ENCODE measurements at regions of chr12 and their contacts with region 1.

Region 1: GRCh38 chr12:53321074-53321814 is at the start of gene AAAS:
- DNase-seq: peak; percentile 98
- H3K4me3 Mint-ChIP-seq: peak within 1 kb of the TSS; percentile 85
- H3K27ac Mint-ChIP-seq: peak within 1 kb of the TSS; percentile 93
- H3K4me1 Mint-ChIP-seq: peaks cover 49% of the 10 kb centered on the region
- H3K27me3 Mint-ChIP-seq: no peaks in the 10 kb centered on the region
- total RNA-seq, gene AAAS: 59.1 to 63.0 TPM

Region 2: DNA sequence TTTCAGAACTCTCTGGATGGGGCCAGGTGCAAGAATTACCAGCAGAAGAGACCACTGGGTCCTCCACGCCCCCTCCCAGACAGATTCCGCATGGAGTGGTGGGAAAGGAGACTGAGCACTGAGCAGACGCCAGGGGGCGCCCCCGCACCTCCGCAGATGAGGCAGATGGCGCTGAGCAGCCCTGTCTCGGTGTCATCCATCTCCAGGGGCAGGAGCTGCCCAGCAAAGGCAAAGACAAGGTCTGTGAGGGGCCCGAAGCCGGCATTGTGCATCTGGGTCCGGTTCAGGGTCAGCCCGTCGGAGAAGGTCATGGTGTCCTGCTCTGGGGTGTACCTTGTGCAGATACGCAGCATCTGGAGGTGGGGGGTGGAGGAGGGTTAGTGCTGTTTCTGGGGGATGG is 107.9 kb before region 1 on chr12:
- CTCF ChIA-PET with region 1: interaction called, 94 read pairs
- POLR2A ChIA-PET with region 1: no interaction called
- DNase-seq: peak; percentile 84
- H3K4me3 Mint-ChIP-seq: no peak overlapping the region
- H3K27ac Mint-ChIP-seq: peak overlapping the region; percentile 37
- H3K4me1 Mint-ChIP-seq: peaks cover 93% of the 10 kb centered on the region
- H3K27me3 Mint-ChIP-seq: no peaks in the 10 kb centered on the region

Region 3: DNA sequence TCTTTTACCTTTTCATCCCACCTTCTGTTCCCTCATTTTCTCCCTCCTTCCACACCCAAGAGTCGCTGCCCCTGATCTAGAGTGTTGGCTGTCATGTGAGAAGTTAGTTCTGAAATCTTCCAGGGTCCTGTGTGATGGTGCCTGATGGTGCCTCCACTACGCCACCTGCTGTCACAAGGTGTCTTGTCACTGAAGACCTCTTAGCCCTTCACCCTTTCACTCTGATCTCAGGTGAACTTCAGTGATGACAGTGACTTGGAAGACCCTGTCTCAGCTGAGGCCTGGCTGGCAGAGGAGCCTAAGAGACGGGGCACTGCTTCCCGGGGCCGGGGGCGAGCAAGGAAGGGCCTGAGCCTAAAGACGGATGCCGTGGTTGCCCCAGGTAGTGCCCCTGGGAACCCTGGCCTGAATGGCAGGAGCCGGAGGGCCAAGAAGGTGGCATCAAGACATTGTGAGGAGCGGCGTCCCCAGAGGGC is 33.5 kb before region 1 on chr12:
- CTCF ChIA-PET with region 1: interaction called, 22 read pairs
- POLR2A ChIA-PET with region 1: no interaction called
- DNase-seq: peak; percentile 76
- H3K4me3 Mint-ChIP-seq: no peak overlapping the region
- H3K27ac Mint-ChIP-seq: peak overlapping the region; percentile 64
- H3K4me1 Mint-ChIP-seq: peaks cover 9% of the 10 kb centered on the region
- H3K27me3 Mint-ChIP-seq: no peaks in the 10 kb centered on the region

Region 4: GRCh38 chr12:53308276-53308675 is 13.0 kb before region 1 on chr12:
- CTCF ChIA-PET with region 1: interaction called, 40 read pairs
- POLR2A ChIA-PET with region 1: no interaction called
- DNase-seq: no peak
- H3K4me3 Mint-ChIP-seq: no peak overlapping the region
- H3K27ac Mint-ChIP-seq: no peak overlapping the region
- H3K4me1 Mint-ChIP-seq: no peaks in the 10 kb centered on the region
- H3K27me3 Mint-ChIP-seq: no peaks in the 10 kb centered on the region

Region 5: GRCh38 chr12:53344824-53345485 is 23.7 kb after region 1 on chr12:
- CTCF ChIA-PET with region 1: interaction called, 48 read pairs
- POLR2A ChIA-PET with region 1: interaction called, 6 read pairs
- DNase-seq: peak; percentile 66
- H3K4me3 Mint-ChIP-seq: peak overlapping the region; percentile 85
- H3K27ac Mint-ChIP-seq: peak overlapping the region; percentile 89
- H3K4me1 Mint-ChIP-seq: peaks cover 21% of the 10 kb centered on the region
- H3K27me3 Mint-ChIP-seq: peaks cover 8% of the 10 kb centered on the region

Region 6: GRCh38 chr12:53424626-53425514 is 103.6 kb after region 1 on chr12:
- CTCF ChIA-PET with region 1: interaction called, 10 read pairs
- POLR2A ChIA-PET with region 1: no interaction called
- DNase-seq: no peak
- H3K4me3 Mint-ChIP-seq: no peak overlapping the region
- H3K27ac Mint-ChIP-seq: no peak overlapping the region
- H3K4me1 Mint-ChIP-seq: peaks cover 15% of the 10 kb centered on the region
- H3K27me3 Mint-ChIP-seq: no peaks in the 10 kb centered on the region

Region 7: GRCh38 chr12:53508534-53509199 is 187.4 kb after region 1 on chr12:
- CTCF ChIA-PET with region 1: interaction called, 13 read pairs
- POLR2A ChIA-PET with region 1: no interaction called
- DNase-seq: peak; percentile 87
- H3K4me3 Mint-ChIP-seq: no peak overlapping the region
- H3K27ac Mint-ChIP-seq: peak overlapping the region; percentile 57
- H3K4me1 Mint-ChIP-seq: peaks cover 14% of the 10 kb centered on the region
- H3K27me3 Mint-ChIP-seq: no peaks in the 10 kb centered on the region

Region 8: DNA sequence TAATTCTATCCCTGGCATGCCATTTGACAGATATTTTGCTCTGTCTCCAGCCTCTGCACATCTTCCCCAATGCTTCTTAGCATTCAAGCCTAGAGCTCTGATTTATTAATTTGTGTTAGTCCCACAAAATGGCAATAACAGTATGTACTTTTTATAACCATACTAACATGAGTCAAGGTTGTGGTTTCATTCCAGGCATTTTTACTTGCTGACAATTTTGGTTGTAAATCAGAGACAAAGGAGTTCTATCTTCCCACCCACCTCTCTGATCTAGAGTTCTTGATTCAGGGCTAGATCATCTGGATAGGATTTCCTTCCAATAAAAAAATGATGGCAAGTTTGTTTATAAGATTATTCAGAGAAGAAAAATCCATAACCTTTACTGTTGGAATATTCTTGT is 449.0 kb after region 1 on chr12:
- CTCF ChIA-PET with region 1: no interaction called
- POLR2A ChIA-PET with region 1: no interaction called
- DNase-seq: no peak
- H3K4me3 Mint-ChIP-seq: no peak overlapping the region
- H3K27ac Mint-ChIP-seq: no peak overlapping the region
- H3K4me1 Mint-ChIP-seq: no peaks in the 10 kb centered on the region
- H3K27me3 Mint-ChIP-seq: peaks cover 55% of the 10 kb centered on the region

Measured in activated CD4-positive, alpha-beta T cell treated with anti-CD3 and anti-CD28 coated beads, Interleukin-2, amount 10 ng/mL, durations not matched to agents 7 days and 5 days (primary cell).